H1 (cell line): ENCODE measurements at regions of chr1 and their contacts with region 1.

Region 1: GRCh38 chr1:198686069-198686728 is 47.4 kb downstream of the PTPRC start:
- DNase-seq: no peak
- H3K4me3 ChIP-seq: no peak overlapping the region
- H3K27ac ChIP-seq: no peak overlapping the region
- H3K4me1 ChIP-seq: peaks cover 0 to 5% (median 2%) of the 10 kb centered on the region in 4 experiments; a peak in 3 of 7 replicates
- H3K27me3 ChIP-seq: no peaks in the 10 kb centered on the region
- CTCF ChIP-seq: no peak; a peak in 1 of 4 replicates
- EP300 ChIP-seq: no peak
- POLR2A ChIP-seq: no peak
- RAD21 ChIP-seq: peak in 1 of 2 experiments; percentile 49

Region 2: GRCh38 chr1:198657550-198658064 is 28.6 kb before region 1 on chr1:
- CTCF ChIA-PET with region 1: no interaction called
- POLR2A ChIA-PET with region 1: no interaction called
- DNase-seq: no peak
- H3K4me3 ChIP-seq: no peak overlapping the region
- H3K27ac ChIP-seq: no peak overlapping the region
- H3K4me1 ChIP-seq: no peaks in the 10 kb centered on the region
- H3K27me3 ChIP-seq: no peaks in the 10 kb centered on the region
- CTCF ChIP-seq: no peak
- EP300 ChIP-seq: no peak
- POLR2A ChIP-seq: no peak
- RAD21 ChIP-seq: no peak

Region 3: GRCh38 chr1:198699167-198700015 is 13.2 kb after region 1 on chr1:
- CTCF ChIA-PET with region 1: interaction called, 13 read pairs
- POLR2A ChIA-PET with region 1: no interaction called
- DNase-seq: peak in 1 of 2 experiments; percentile 79
- H3K4me3 ChIP-seq: peak overlapping the region in 1 of 4 experiments; percentile 25; a peak in 1 of 8 replicates
- H3K27ac ChIP-seq: no peak overlapping the region
- H3K4me1 ChIP-seq: peaks cover 5 to 31% (median 10%) of the 10 kb centered on the region in 4 experiments
- H3K27me3 ChIP-seq: no peaks in the 10 kb centered on the region
- CTCF ChIP-seq: peak; percentile 67 to 91 (median 83)
- EP300 ChIP-seq: no peak
- POLR2A ChIP-seq: no peak
- RAD21 ChIP-seq: peak; percentile 67 to 68

Region 4: DNA sequence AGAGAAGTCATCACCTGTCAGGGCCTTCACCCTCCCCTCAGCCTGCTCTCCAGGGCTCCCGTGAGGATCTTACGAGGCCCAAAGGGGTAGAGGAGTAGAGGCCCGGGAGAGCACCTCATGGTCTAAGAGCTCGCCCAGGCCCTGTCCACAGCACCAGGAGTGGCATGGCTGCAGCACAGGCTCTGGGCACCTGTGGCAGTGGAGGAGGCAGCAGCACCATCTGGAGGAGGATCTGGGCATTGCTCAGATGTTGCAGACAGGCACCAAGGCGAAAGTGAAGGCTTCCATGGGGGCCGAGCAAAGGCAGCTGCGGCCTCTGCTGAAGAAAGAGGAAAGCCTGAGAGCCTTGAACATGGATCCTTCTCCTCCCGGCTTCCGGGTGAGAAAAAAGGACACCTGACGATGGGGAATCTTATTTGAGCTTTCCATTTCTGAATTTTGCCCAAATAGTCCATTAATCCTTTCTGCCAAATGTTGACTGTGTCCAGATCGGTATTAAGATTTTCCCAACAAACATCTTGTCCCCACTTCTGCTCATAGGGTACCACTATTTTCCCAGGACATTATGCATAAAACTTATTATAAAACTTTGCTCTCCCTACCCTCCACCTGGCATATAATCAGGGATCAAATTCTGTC is 557.3 kb after region 1 on chr1:
- CTCF ChIA-PET with region 1: no interaction called
- POLR2A ChIA-PET with region 1: no interaction called
- DNase-seq: peak; percentile 57 to 90
- H3K4me3 ChIP-seq: no peak overlapping the region
- H3K27ac ChIP-seq: no peak overlapping the region
- H3K4me1 ChIP-seq: no peaks in the 10 kb centered on the region
- H3K27me3 ChIP-seq: no peaks in the 10 kb centered on the region
- CTCF ChIP-seq: peak; percentile 79 to 92 (median 86)
- EP300 ChIP-seq: no peak
- POLR2A ChIP-seq: no peak
- RAD21 ChIP-seq: peak; percentile 92